ENCODE measurements at regions of chr7 and their contacts with region 1.

Region 1: DNA sequence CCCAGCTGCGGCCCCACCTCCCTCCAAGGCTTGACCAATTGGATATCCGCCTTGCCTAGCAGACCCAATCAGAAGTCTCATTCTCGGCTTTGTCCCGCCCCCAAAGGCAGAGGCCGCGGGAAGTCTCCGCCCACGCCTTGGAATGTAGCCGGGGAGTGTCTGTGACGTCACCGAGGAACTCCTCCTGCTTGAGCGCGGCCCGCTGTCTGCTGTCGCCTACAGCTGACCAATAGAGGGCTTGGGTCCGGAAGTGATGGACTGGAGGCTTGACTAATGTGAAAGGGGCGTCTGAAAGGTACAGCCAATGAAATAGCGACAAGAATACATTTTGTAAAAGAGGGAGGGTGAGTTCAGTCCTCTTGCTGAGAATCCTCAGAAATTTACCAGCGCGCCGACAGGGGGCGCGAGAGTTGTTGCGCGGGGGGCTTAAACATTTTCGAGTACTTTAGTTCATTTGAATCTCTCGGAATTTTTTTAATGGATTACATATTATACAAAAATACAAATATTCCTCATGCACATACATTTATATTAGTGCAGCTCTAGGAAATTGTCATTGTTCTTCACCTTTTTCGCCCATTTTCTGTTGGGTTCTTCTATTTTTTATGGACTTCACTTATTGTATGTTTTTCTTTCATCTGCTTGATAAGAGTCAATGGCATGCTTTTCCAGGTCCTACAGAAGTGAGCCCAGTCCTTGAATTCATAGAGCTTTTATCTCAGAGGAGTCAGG is 376 bp upstream of the CREB3L2 start:
- DNase-seq: peak; percentile 99
- H3K4me3 ChIP-seq: peak overlapping the region; percentile 97
- CTCF ChIP-seq: peak; percentile 70

Region 2: GRCh38 chr7:137923380-137923779 is 78.9 kb before region 1 on chr7:
- CTCF ChIA-PET with region 1: interaction called, 831 read pairs
- POLR2A ChIA-PET with region 1: interaction called, 4 read pairs
- DNase-seq: peak; percentile 68
- H3K4me3 ChIP-seq: no peak overlapping the region
- CTCF ChIP-seq: no peak

Region 3: GRCh38 chr7:137940656-137941518 is 61.4 kb before region 1 on chr7:
- CTCF ChIA-PET with region 1: interaction called, 14 read pairs
- POLR2A ChIA-PET with region 1: interaction called, 4 read pairs
- DNase-seq: no peak
- H3K4me3 ChIP-seq: no peak overlapping the region
- CTCF ChIP-seq: no peak

Region 4: DNA sequence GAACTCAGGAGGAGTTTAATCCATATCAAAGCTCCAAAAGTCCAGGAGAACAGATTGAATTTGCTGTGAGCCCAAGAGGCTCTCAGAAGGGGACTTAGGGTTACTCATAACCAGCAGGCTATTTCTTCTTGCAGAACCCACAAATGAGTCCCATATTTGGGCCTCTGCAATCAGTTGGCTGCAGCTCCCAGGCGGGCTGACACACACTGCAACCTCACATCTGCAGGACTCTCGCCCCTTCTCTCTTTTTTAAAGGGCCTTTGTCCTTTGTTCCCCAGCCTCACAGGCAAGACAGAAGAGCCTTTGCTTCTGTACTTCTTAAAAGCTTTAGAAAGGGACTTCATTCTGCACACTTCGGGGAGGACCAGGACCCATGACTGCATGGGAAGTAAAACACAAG is 27.0 kb before region 1 on chr7:
- CTCF ChIA-PET with region 1: interaction called, 38 read pairs
- POLR2A ChIA-PET with region 1: interaction called, 5 read pairs
- DNase-seq: no peak
- H3K4me3 ChIP-seq: no peak overlapping the region; the same call in 1 of the 2 replicates
- CTCF ChIP-seq: no peak

Region 5: DNA sequence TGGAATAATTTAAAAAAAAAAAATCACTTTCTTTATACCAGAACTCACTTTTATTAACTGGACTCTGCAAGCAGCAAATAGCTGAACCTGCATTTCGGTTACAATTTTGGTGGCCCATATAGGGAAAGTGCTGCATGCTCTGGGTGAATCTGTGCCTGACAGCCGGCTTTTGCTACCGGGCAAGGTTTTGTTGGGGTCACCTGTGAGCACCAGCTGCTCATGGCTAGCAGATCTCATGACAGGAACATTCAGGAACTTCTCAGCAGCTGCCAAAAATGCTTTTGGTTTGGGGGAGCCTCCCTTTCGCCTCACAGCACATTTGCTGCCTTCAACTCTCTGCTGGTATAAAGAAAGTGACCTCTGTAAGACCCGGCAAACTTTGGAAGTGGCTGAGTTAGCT is 12.8 kb after region 1 on chr7:
- CTCF ChIA-PET with region 1: interaction called, 50 read pairs
- POLR2A ChIA-PET with region 1: no interaction called
- DNase-seq: no peak
- H3K4me3 ChIP-seq: no peak overlapping the region
- CTCF ChIP-seq: no peak

Region 6: GRCh38 chr7:138565451-138566114 is 563.3 kb after region 1 on chr7:
- CTCF ChIA-PET with region 1: no interaction called
- POLR2A ChIA-PET with region 1: no interaction called
- DNase-seq: peak; percentile 37
- H3K4me3 ChIP-seq: no peak overlapping the region
- CTCF ChIP-seq: no peak

Measured in AG04449 (cell line).